ENCODE measurements at regions of chr12 and their contacts with region 1.

Region 1: GRCh38 chr12:107093417-107094182 is at the start of gene CRY1:
- DNase-seq: peak; percentile 87 to 98 (median 94)
- ATAC-seq: peak; percentile 90
- H3K4me3 ChIP-seq: peak within 1 kb of the TSS; percentile 85
- H3K4me3 Mint-ChIP-seq: no peak within 1 kb of the TSS
- H3K27ac ChIP-seq: peak within 1 kb of the TSS; percentile 99
- H3K27ac Mint-ChIP-seq: no peak within 1 kb of the TSS
- H3K4me1 ChIP-seq: peaks cover 16 to 18% of the 10 kb centered on the region in 2 donors
- H3K4me1 Mint-ChIP-seq: peaks cover 5 to 18% (median 11%) of the 10 kb centered on the region in 7 donors
- H3K27me3 ChIP-seq: no peaks in the 10 kb centered on the region
- H3K27me3 Mint-ChIP-seq: peaks cover 0 to 11% (median 5%) of the 10 kb centered on the region in 5 donors
- total RNA-seq, gene CRY1: 8.0 to 58.4 (median 33.4) TPM

Region 2: DNA sequence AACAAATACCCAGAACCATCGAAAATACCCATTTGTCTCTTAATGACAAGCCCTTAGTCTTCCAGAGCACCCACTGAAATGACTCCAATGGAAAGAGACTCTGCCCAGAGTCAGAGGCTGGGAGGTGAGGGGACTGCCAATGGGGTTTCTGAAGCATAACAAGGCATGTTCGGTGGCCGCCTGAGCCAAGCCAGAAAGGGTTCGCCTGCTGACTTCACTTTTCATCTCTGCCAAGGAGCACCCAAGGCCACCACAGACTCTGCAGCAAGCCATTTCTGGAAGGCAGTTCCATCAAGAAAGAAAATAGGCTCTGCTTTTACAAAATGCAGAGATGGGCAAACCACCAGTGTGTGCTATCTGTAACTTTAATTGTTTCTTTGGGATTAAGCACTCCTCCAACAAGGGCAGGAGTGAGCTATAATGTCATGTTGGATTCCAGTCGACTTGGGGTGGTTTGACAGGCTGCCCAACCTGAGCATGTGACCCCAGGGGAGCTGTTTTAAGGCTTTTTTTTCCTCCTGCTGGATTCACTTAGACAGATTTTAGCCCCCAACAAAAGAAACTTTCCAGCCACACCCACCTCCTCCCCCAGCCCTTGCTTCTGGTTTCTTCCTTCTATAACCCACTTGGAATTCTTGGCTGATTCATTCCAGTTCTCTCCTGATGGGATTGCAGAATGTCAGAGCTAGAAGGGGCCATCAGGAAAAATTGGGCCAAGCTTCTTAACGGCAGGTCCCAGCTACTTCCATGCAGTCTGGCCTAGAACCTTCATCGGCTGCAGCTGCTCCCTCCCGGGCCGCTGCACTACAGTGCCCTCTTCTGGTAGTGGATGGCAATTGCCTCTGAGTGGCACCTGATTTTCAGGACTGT is 869.9 kb before region 1 on chr12:
- CTCF ChIA-PET with region 1: no interaction called
- POLR2A ChIA-PET with region 1: no interaction called
- intact Hi-C with region 1: loop called in 1 of 2 experiments (anchors 2 kb)
- DNase-seq: peak; percentile 41 to 80 (median 66)
- ATAC-seq: peak; percentile 78
- H3K4me3 ChIP-seq: no peak overlapping the region
- H3K4me3 Mint-ChIP-seq: peak overlapping the region in 3 of 10 donors; percentile 14 to 67 (median 33)
- H3K27ac ChIP-seq: no peak overlapping the region
- H3K27ac Mint-ChIP-seq: peak overlapping the region in 1 of 9 donors; percentile 49
- H3K4me1 ChIP-seq: peaks cover 0 to 13% of the 10 kb centered on the region in 2 donors
- H3K4me1 Mint-ChIP-seq: peaks cover 12 to 22% (median 19%) of the 10 kb centered on the region in 7 donors
- H3K27me3 ChIP-seq: no peaks in the 10 kb centered on the region
- H3K27me3 Mint-ChIP-seq: peaks cover 4 to 20% (median 10%) of the 10 kb centered on the region in 5 donors

Region 3: DNA sequence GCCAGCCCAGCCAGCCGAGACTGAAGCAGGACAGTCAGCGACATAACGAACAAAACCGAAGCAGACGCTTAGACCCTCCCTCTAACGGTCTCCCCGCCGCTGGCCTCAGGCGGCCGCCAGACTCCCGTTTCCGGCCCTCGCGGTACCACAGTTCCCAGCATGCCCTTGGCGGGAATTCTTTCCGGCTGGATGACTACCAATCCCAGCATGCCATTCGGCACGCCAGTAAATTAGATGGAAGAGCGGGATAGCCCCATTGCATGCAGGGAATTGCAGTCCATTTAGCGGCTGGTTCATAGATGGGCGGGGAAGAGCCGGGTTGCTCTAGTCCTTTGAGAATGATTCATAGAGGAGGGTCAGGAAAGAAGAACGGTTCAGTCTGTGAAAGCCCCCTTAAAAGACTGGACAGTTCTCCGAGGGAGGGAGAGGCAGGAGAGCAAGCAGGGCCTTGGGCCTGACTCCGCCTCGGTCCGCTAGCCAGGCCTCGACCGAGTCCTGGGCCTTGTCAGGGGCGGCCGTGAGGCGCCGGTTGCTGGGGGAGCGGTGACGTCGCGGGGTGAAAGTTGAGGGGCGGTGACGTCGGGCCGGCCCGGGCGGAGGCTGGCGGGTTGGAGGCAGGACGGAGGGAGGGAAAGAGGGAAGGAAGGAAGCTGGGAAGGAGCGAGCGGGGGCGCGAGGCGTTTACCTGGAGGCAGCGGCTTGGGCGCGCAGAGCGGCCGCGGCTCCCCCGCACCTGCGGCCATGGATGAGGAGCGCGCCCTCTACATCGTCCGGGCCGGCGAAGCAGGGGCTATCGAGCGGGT is 319.4 kb before region 1 on chr12 and contains the start of gene RIC8B:
- CTCF ChIA-PET with region 1: no interaction called
- POLR2A ChIA-PET with region 1: no interaction called
- intact Hi-C with region 1: loop called (anchors 1 to 2 kb)
- DNase-seq: peak; percentile 63 to 84 (median 70)
- ATAC-seq: peak; percentile 91
- H3K4me3 ChIP-seq: peak within 1 kb of the TSS; percentile 84
- H3K4me3 Mint-ChIP-seq: peak within 1 kb of the TSS; percentile 92 to 100 (median 97)
- H3K27ac ChIP-seq: peak within 1 kb of the TSS; percentile 88
- H3K27ac Mint-ChIP-seq: peak within 1 kb of the TSS; percentile 94 to 99 (median 97)
- H3K4me1 ChIP-seq: peaks cover 0 to 19% of the 10 kb centered on the region in 2 donors
- H3K4me1 Mint-ChIP-seq: peaks cover 22 to 49% (median 39%) of the 10 kb centered on the region in 7 donors
- H3K27me3 ChIP-seq: no peaks in the 10 kb centered on the region
- H3K27me3 Mint-ChIP-seq: peaks cover 0 to 7% (median 0%) of the 10 kb centered on the region in 5 donors
- total RNA-seq, gene RIC8B: 9.8 to 21.1 (median 15.6) TPM

Region 4: GRCh38 chr12:106934277-106934676 is 159.3 kb before region 1 on chr12:
- CTCF ChIA-PET with region 1: no interaction called
- POLR2A ChIA-PET with region 1: no interaction called
- intact Hi-C with region 1: no loop called
- DNase-seq: no peak
- ATAC-seq: no peak
- H3K4me3 ChIP-seq: no peak overlapping the region
- H3K4me3 Mint-ChIP-seq: no peak overlapping the region
- H3K27ac ChIP-seq: no peak overlapping the region
- H3K27ac Mint-ChIP-seq: peak overlapping the region in 1 of 9 donors; percentile 9
- H3K4me1 ChIP-seq: no peaks in the 10 kb centered on the region
- H3K4me1 Mint-ChIP-seq: peaks cover 0 to under 1% (median 0%) of the 10 kb centered on the region in 7 donors
- H3K27me3 ChIP-seq: no peaks in the 10 kb centered on the region
- H3K27me3 Mint-ChIP-seq: peaks cover 10 to 45% (median 20%) of the 10 kb centered on the region in 5 donors

Region 5: GRCh38 chr12:107079172-107080011 is 14.2 kb before region 1 on chr12:
- CTCF ChIA-PET with region 1: no interaction called
- POLR2A ChIA-PET with region 1: no interaction called
- intact Hi-C with region 1: loop called in 1 of 2 experiments (anchors 1 kb)
- DNase-seq: peak in 4 of 9 donors; percentile 19 to 24 (median 22)
- ATAC-seq: peak; percentile 56
- H3K4me3 ChIP-seq: no peak overlapping the region
- H3K4me3 Mint-ChIP-seq: no peak overlapping the region
- H3K27ac ChIP-seq: no peak overlapping the region
- H3K27ac Mint-ChIP-seq: no peak overlapping the region
- H3K4me1 ChIP-seq: no peaks in the 10 kb centered on the region
- H3K4me1 Mint-ChIP-seq: peaks cover 0 to 40% (median 18%) of the 10 kb centered on the region in 7 donors
- H3K27me3 ChIP-seq: no peaks in the 10 kb centered on the region
- H3K27me3 Mint-ChIP-seq: peaks cover 0 to 3% (median 0%) of the 10 kb centered on the region in 5 donors

Region 6: DNA sequence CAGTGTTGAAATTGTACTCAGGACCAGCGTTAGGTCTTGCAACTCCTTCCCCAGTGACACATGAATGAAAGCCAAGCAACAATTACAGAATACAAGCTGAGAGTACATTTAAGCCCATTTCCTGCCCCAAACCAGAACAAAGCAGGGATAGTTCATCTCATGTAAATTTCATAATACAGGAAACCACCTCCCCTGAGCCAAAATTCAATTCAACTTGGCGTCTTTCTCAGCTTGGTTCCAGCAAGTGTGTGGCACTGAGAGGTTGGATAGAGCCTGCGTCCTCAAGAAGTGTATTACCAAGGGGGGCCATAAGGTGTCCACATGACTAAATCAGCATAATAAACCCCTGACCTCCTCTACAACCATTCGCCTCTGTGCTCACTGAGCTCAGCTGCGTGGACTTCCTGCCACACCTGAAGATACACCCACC is 278.6 kb after region 1 on chr12:
- CTCF ChIA-PET with region 1: no interaction called
- POLR2A ChIA-PET with region 1: no interaction called
- intact Hi-C with region 1: loop called (anchors 1 to 2 kb)
- DNase-seq: peak in 8 of 9 donors; percentile 37 to 74 (median 68)
- ATAC-seq: peak; percentile 76
- H3K4me3 ChIP-seq: peak overlapping the region; percentile 20
- H3K4me3 Mint-ChIP-seq: peak overlapping the region; percentile 63 to 85 (median 81)
- H3K27ac ChIP-seq: peak overlapping the region; percentile 64
- H3K27ac Mint-ChIP-seq: peak overlapping the region; percentile 88 to 96 (median 94)
- H3K4me1 ChIP-seq: peaks cover 50 to 73% of the 10 kb centered on the region in 2 donors
- H3K4me1 Mint-ChIP-seq: peaks cover 68 to 89% (median 86%) of the 10 kb centered on the region in 7 donors
- H3K27me3 ChIP-seq: no peaks in the 10 kb centered on the region
- H3K27me3 Mint-ChIP-seq: no peaks in the 10 kb centered on the region

Region 7: DNA sequence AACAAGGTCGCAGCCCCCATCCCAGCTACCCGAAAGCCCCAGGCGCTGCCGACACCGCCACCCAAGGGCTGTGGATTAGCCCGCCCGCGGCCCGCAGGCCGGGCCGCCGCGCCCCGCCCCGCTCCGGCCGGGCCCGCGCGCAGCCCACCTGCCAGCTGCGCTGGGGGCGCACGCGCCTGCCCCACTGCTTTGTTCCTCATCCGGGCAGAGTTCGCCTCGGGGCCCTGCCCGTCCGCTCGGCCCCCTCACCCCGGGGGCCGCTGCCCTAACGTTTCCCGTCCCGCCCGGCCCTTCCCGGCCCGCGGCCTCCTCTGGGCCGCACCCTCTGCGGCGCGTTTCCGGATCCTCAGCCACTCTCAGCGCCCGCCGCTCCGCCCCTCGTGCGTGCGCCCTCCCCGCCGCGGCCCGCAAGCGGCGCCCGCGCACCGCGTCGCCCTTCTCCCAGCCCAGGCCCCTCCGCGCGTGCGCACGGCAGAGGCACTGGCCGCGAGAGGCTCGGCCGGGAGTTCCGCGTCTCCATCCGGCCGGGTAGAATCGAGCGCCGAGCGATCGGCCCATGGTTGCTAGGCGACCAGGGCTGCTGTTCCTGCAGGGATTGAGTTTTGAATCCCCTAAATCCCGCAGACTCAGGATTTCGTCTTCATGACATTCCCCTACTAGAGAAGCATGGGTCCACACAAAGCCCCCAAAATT is 667.4 kb after region 1 on chr12 and contains the start of gene PRDM4:
- CTCF ChIA-PET with region 1: no interaction called
- POLR2A ChIA-PET with region 1: no interaction called
- intact Hi-C with region 1: loop called (anchors 1 to 2 kb)
- DNase-seq: peak; percentile 85 to 96 (median 93)
- ATAC-seq: peak; percentile 99
- H3K4me3 ChIP-seq: peak within 1 kb of the TSS; percentile 83
- H3K4me3 Mint-ChIP-seq: peak within 1 kb of the TSS; percentile 85 to 94 (median 91)
- H3K27ac ChIP-seq: peak within 1 kb of the TSS; percentile 78
- H3K27ac Mint-ChIP-seq: peak within 1 kb of the TSS; percentile 85 to 96 (median 91)
- H3K4me1 ChIP-seq: peaks cover 21% of the 10 kb centered on the region in 2 donors
- H3K4me1 Mint-ChIP-seq: peaks cover 19 to 52% (median 35%) of the 10 kb centered on the region in 7 donors
- H3K27me3 ChIP-seq: no peaks in the 10 kb centered on the region
- H3K27me3 Mint-ChIP-seq: peaks cover 0 to 5% (median 0%) of the 10 kb centered on the region in 5 donors
- total RNA-seq, gene PRDM4: 32.4 to 41.3 (median 36.4) TPM